ENCODE measurements at regions of chr10 and their contacts with region 1.

Region 1: GRCh38 chr10:101041252-101041761 is 10.3 kb downstream of the SFXN3 start:
- DNase-seq: peak; percentile 81 to 91 (median 85)
- ATAC-seq: peak; percentile 74 to 79
- H3K4me3 ChIP-seq: no peak overlapping the region
- H3K27ac ChIP-seq: no peak overlapping the region
- H3K4me1 ChIP-seq: no peaks in the 10 kb centered on the region
- H3K27me3 ChIP-seq: no peaks in the 10 kb centered on the region

Region 2: GRCh38 chr10:100710151-100710871 is 331.0 kb before region 1 on chr10:
- intact Hi-C with region 1: no loop called
- DNase-seq: no peak
- ATAC-seq: peak in 1 of 2 donors; percentile 18
- H3K4me3 ChIP-seq: no peak overlapping the region
- H3K27ac ChIP-seq: no peak overlapping the region
- H3K4me1 ChIP-seq: no peaks in the 10 kb centered on the region
- H3K27me3 ChIP-seq: no peaks in the 10 kb centered on the region

Region 3: DNA sequence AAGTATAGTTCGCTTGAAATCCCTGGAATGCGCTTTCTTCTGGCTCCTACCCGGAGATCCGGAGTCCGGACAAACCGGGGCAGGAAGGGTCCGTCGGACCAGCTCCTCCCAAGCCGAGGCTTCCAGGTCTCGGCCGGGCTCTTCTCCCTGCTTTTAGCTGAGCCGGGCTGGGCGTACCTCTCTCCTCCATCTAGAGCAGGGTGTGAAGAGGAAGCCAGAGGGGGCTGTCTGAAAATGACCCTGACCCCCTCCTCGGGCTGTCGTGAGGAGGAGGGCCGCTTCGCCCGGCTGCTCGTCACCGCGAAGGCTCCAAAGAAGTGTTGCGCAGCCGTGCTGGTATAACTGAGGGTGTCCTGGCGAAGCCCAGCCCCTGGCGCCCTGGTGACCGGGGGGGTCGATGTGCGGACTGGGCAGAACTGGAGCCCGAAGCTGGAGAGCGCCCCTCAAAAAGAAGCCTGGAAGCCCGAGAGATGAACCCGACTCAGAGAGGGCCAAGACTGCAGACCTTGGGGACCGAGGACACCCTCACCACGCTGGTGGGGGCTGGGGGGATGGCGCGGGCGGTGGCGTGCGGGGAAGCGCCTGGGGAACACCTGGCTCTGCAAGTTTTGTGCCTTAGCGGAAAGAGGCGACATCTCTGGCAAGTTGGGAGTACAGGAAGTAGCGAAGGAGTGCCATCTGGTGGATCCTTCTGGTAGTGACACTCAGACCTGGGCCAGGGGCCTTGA is 26.2 kb after region 1 on chr10:
- intact Hi-C with region 1: loop called in 2 of 4 experiments (anchors 2 kb)
- DNase-seq: peak; percentile 66 to 87 (median 81)
- ATAC-seq: peak; percentile 25 to 45
- H3K4me3 ChIP-seq: peak overlapping the region; percentile 83
- H3K27ac ChIP-seq: peak overlapping the region; percentile 61
- H3K4me1 ChIP-seq: peaks cover 14% of the 10 kb centered on the region
- H3K27me3 ChIP-seq: no peaks in the 10 kb centered on the region